Panc1 (cell line): ENCODE measurements at regions of chr12 and their contacts with region 1.

Region 1: GRCh38 chr12:94656575-94656974 is 6.2 kb upstream of the TMCC3 start:
- DNase-seq: no peak
- ATAC-seq: no peak
- H3K4me3 ChIP-seq: no peak overlapping the region
- H3K27ac ChIP-seq: no peak overlapping the region
- H3K4me1 ChIP-seq: no peaks in the 10 kb centered on the region
- H3K27me3 ChIP-seq: peaks cover 6% of the 10 kb centered on the region
- CTCF ChIP-seq: no peak

Region 2: DNA sequence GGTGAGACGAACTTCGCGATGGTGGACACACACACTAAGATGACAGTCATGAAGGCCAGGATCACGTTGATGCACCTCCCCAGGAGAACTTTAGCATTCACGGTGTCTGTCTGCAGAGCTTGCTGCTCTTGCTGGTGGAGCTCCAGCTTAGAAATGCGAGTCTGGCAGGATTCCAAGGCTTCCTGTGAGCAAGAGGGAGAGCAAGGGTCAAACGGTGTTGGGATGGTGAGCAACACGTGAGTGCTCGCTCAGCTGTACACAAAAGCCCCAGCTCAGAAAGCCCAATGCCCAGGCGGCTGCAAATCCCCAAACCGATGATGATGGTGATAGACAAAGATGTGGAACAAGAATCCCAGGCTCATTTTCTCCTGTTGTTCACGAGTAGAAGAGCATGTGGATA is 85.0 kb before region 1 on chr12:
- CTCF ChIA-PET with region 1: no interaction called
- POLR2A ChIA-PET with region 1: no interaction called
- in situ Hi-C with region 1: no loop called
- intact Hi-C with region 1: no loop called
- DNase-seq: no peak
- ATAC-seq: 0 out of 2 replicates have a peak, but pooled peaks have one; percentile 21
- H3K4me3 ChIP-seq: no peak overlapping the region
- H3K27ac ChIP-seq: no peak overlapping the region
- H3K4me1 ChIP-seq: no peaks in the 10 kb centered on the region
- H3K27me3 ChIP-seq: 0 out of 2 replicates have a peak, but pooled peaks cover 2% of the 10 kb centered on the region
- CTCF ChIP-seq: no peak

Region 3: DNA sequence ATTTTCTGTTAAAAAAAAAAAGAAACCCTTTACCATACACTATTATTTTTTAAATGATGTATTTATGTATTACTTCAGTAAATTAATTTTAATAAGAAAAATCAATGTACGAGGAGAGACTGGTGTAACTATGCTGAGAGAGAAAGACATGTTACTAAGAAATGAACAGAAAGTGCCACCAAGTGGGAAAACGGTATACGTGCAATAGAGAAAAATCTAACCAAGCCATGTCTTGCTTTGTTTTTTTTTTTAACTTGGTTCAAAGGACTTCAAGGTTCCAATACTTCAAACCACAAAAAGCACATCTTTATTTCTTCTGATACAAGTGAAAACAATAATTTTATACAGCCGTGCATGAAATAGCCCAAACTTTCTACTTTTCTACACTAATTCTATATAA is 324.0 kb after region 1 on chr12:
- CTCF ChIA-PET with region 1: no interaction called
- POLR2A ChIA-PET with region 1: interaction called, 18 read pairs
- in situ Hi-C with region 1: no loop called
- intact Hi-C with region 1: no loop called
- DNase-seq: no peak
- ATAC-seq: no peak
- H3K4me3 ChIP-seq: no peak overlapping the region
- H3K27ac ChIP-seq: no peak overlapping the region
- H3K4me1 ChIP-seq: no peaks in the 10 kb centered on the region
- H3K27me3 ChIP-seq: no peaks in the 10 kb centered on the region
- CTCF ChIP-seq: peak; percentile 30; the same call in 1 of the 2 replicates